ENCODE measurements at regions of chr15 and their contacts with region 1.

Region 1: DNA sequence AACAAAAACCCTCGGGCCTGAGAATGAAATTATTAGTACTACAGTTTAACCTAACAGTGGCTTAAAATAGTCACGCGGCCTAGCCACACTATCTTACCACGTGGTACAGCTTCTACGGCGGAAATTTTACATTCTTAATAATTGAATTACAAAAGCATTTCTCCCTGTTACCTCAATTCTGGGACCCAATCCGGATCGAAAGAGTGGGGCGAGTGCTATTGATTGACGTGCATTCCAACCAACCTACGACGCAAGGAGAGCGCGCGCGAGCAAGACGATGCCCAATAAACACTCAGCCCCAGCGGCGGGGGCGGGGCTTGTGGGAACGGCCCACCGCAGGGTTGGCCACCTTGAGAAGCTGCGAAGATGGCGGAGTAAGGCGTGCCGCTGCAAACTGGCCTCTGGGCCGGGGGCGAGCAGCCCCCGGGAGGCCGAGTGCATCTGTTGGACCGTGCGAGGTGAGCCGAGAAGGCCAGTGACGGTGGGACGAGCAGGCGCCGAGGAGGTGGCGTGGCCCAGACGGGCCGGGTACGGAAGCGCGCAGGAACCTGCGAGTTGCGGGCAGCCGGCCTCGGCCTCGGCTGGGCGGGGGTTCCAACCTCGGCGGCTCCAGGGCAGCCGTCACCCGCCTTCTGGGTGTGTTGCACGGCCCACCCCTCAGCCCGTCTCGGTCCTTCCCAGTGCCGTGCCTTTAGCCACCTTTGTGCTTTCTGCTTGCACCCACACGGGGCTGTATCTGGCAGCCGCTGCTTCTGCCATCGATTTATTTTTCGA is 48.6 kb downstream of the OIP5 start:
- DNase-seq: peak; percentile 99
- ATAC-seq: peak; percentile 99

Region 2: GRCh38 chr15:41207687-41208448 is 76.0 kb before region 1 on chr15:
- intact Hi-C with region 1: no loop called
- DNase-seq: no peak
- ATAC-seq: no peak

Region 3: DNA sequence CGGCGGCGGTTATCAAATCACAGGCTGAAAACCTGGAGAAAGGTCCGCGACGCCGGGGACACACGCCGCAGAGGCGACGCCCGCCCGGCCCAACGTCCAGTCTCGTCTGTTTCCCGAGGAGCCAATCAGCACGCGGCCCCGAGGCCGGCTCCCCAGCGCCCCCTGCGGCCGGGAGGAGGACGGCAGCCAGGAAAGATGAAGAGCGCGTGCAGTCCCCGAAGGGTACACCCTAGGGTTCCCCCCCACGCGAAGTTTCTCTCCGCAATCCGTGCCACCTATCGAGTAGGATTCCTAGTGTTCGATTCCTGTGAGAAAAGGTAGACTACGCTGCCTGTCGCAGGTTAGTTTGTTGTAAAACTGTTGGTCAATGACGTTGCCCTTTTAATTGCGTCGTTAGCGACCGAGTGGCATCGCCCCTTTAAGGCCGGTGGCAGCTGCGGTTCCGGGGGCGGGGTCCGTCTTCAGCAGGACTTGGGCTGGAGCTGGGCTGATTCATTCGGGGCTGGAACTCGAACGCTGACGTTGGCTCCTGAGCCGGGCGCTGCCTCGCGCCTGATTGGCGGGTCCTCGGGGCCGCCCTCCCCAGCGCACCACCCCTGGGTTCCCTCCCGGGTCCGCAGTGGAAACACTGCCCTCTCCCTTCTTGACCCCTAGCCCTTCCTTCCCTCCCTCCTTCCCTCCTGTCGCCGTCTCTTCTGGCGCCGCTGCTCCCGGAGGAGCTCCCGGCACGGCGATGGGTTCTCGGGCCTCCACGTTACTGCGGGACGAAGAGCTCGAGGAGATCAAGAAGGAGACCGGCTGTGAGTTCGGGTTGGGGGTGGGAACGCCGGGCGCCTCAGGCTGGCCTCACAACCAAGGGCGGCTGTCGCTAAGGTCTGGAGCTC is 52.9 kb before region 1 on chr15 and contains the starts of genes CHP1 and EXD1:
- intact Hi-C with region 1: loop called in 1 of 2 experiments (anchors 5 kb)
- DNase-seq: peak; percentile 100
- ATAC-seq: peak; percentile 99
- total RNA-seq, gene CHP1: 113 to 123 TPM
- total RNA-seq, gene EXD1: not detected

Region 4: DNA sequence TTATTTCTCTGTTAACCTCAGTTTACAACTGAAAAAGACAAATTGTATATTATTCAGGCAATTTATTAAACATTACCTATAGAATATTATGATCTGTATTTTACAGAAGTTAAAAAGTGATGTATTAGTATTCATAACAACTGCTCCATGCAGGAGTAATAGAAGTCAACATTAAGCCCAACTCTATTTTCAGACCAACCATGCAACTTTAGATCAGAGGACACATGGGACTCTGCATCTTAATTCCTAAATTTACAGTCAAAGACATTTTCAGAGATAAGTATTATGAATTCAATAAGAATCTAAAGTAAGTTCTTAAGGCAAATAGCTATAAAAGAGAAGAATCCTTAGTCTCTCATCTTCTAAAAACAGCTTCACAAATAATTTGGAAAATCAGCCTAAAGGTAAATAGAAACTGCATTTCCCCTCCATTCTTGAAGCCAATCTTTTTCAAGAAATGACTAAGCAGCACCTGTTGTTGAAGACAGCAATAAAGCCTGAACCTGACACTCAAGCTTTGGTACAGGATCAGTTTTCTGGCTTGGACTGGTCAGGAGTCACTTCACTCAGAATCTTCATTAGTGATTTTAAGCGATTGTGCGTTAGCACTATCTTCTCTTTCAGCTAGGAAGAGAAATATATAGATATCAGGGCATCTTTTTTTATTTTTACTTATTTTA is 25.5 kb after region 1 on chr15:
- intact Hi-C with region 1: no loop called
- DNase-seq: no peak
- ATAC-seq: no peak